ENCODE measurements at regions of chr1 and their contacts with region 1.

Region 1: GRCh38 chr1:107529502-107530149 is 388.8 kb downstream of the NTNG1 start:
- DNase-seq: peak; percentile 26
- H3K4me3 ChIP-seq: no peak overlapping the region
- H3K27ac ChIP-seq: no peak overlapping the region
- H3K4me1 ChIP-seq: no peaks in the 10 kb centered on the region
- H3K27me3 ChIP-seq: no peaks in the 10 kb centered on the region
- CTCF ChIP-seq: peak; percentile 48 to 54
- POLR2A ChIP-seq: no peak

Region 2: GRCh38 chr1:107277022-107277421 is 252.6 kb before region 1 on chr1:
- CTCF ChIA-PET with region 1: interaction called, 11 read pairs
- POLR2A ChIA-PET with region 1: no interaction called
- dilution Hi-C with region 1: no loop called
- intact Hi-C with region 1: no loop called
- DNase-seq: peak; percentile 21
- H3K4me3 ChIP-seq: no peak overlapping the region
- H3K27ac ChIP-seq: no peak overlapping the region
- H3K4me1 ChIP-seq: no peaks in the 10 kb centered on the region
- H3K27me3 ChIP-seq: no peaks in the 10 kb centered on the region
- CTCF ChIP-seq: peak in 1 of 2 donors; percentile 28
- POLR2A ChIP-seq: no peak

Region 3: GRCh38 chr1:107430540-107431228 is 98.9 kb before region 1 on chr1:
- CTCF ChIA-PET with region 1: interaction called, 3 read pairs
- POLR2A ChIA-PET with region 1: no interaction called
- dilution Hi-C with region 1: no loop called
- intact Hi-C with region 1: loop called (anchors 1 kb)
- DNase-seq: peak; percentile 18
- H3K4me3 ChIP-seq: no peak overlapping the region
- H3K27ac ChIP-seq: no peak overlapping the region
- H3K4me1 ChIP-seq: no peaks in the 10 kb centered on the region
- H3K27me3 ChIP-seq: no peaks in the 10 kb centered on the region
- CTCF ChIP-seq: peak; percentile 28 to 53
- POLR2A ChIP-seq: no peak